PC-3 (cell line): ENCODE measurements at regions of chr9 and their contacts with region 1.

Region 1: DNA sequence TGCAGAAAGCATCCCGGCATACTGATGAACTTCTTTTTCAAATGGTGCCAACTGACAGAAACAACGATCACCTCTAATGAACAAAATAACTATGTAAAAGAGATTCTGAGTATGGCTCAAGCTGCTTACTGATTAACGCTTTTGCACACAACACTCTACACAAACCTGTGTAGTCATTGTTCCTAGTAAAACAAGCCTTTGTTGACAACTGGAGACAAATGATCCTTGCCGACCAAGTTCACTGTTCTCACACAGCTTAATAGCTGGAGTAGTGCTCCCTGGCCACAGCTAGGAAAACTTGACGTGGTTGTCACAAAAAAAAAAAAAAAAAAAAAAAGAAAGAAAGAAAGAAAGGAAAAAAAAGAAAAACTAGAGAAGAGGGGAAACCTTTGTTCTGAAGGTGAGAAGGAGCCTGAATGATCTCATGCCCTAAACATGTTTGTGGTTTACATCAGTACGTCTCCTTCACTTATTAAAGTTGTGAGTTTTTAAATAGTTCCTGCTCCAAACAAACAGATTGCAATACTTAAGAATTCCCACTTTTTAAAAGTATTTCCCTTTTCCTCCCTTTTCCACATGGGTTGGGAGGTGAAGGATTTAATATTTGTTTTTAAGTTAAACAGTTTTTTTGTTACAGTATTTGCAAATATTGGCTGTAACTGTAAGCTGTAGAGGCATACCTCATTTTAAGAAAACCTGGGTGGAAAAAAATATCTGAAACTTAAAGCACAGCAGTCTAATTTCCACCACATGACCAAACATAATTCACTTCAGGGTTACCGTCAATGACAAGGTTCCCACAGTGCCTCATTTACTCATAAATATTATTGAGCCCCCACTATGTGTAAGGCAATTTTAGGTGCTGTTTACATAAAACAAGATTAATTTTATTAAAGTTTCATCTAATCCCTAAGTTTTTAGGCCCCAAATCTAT is 63.7 kb downstream of the GLIS3 start:
- DNase-seq: peak; percentile 63
- ATAC-seq: peak; percentile 79
- H3K4me3 ChIP-seq: peak overlapping the region; percentile 25; the same call in 1 of the 2 replicates
- H3K27ac ChIP-seq: peak overlapping the region; percentile 71
- H3K4me1 ChIP-seq: peaks cover 27% of the 10 kb centered on the region
- H3K27me3 ChIP-seq: no peaks in the 10 kb centered on the region
- CTCF ChIP-seq: no peak

Region 2: GRCh38 chr9:4114569-4115505 is 121.3 kb before region 1 on chr9:
- CTCF ChIA-PET with region 1: no interaction called
- POLR2A ChIA-PET with region 1: no interaction called
- intact Hi-C with region 1: no loop called
- DNase-seq: no peak
- ATAC-seq: no peak
- H3K4me3 ChIP-seq: no peak overlapping the region
- H3K27ac ChIP-seq: no peak overlapping the region
- H3K4me1 ChIP-seq: 0 out of 2 replicates have a peak, but pooled peaks cover under 1% of the 10 kb centered on the region
- H3K27me3 ChIP-seq: no peaks in the 10 kb centered on the region
- CTCF ChIP-seq: no peak

Region 3: DNA sequence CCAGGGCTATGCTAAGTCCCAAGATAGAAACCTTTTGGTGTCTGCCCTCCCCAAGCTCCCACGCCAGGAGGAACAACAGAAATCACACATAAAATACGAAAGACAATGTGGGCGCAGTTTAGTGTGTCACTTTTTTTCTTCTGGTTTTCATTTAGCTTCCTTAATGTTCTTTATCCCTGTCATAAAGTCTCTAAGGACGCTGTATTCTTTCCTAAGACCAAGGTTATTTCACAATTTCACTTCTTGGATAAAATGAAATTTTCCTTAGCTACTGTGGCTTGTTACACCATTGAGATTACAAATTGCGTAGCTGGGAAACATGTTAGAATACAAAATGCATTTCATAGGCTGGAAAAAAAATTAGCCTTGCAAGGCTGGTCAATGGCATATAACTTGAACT is 21.7 kb before region 1 on chr9:
- CTCF ChIA-PET with region 1: no interaction called
- POLR2A ChIA-PET with region 1: no interaction called
- intact Hi-C with region 1: no loop called
- DNase-seq: no peak
- ATAC-seq: no peak
- H3K4me3 ChIP-seq: no peak overlapping the region
- H3K27ac ChIP-seq: no peak overlapping the region
- H3K4me1 ChIP-seq: no peaks in the 10 kb centered on the region
- H3K27me3 ChIP-seq: no peaks in the 10 kb centered on the region
- CTCF ChIP-seq: no peak

Region 4: DNA sequence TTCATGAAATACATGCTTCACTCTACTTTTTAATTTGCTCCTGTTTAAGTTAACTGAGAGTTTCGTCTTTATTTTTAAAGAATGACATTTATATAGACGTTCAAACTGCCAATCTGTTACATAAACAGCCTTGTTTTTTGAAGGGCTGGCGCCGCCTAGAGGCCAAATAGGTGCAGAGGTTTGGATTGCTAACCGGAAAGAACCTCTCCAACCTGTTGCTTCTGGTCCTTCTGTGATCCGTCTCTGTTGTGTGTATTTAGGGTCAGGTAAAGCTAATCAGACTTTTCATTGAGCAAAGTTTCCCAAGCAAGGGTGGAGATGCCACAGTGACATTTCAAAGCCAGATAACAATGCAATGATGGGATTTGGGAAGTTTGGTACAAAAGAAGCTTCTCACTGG is 103.2 kb after region 1 on chr9:
- CTCF ChIA-PET with region 1: no interaction called
- POLR2A ChIA-PET with region 1: no interaction called
- intact Hi-C with region 1: loop called (anchors 2 kb)
- DNase-seq: peak; percentile 87
- ATAC-seq: peak; percentile 76
- H3K4me3 ChIP-seq: no peak overlapping the region
- H3K27ac ChIP-seq: no peak overlapping the region
- H3K4me1 ChIP-seq: no peaks in the 10 kb centered on the region
- H3K27me3 ChIP-seq: no peaks in the 10 kb centered on the region
- CTCF ChIP-seq: peak; percentile 89

Region 5: DNA sequence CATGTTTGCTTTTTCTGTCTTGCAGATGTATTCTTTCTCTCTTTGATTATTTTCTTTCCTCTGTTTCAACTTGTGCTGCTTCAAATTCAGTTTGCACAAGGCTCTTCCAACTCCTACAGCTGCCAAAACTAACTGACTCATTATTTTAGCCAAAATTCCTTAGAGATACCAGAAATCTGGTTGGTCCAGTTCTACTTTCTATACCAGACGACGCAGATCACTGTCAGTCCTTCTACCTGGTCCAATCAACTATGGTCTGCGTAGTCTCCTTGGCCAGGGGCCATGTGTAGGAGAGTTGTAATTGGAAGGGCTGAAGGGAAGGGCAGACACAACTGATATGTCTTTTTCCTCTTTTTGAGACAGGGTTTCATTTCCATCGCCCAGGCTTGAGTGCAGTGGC is 697.0 kb after region 1 on chr9:
- CTCF ChIA-PET with region 1: no interaction called
- POLR2A ChIA-PET with region 1: no interaction called
- intact Hi-C with region 1: loop called (anchors 5 kb)
- DNase-seq: peak; percentile 96
- ATAC-seq: peak; percentile 67
- H3K4me3 ChIP-seq: peak overlapping the region; percentile 46; the same call in 1 of the 2 replicates
- H3K27ac ChIP-seq: peak overlapping the region; percentile 92
- H3K4me1 ChIP-seq: peaks cover 39% of the 10 kb centered on the region
- H3K27me3 ChIP-seq: no peaks in the 10 kb centered on the region
- CTCF ChIP-seq: no peak